Gastrocnemius medialis (tissue), 4 donors: ENCODE measurements at regions of chr11 and their contacts with region 1.

Region 1: DNA sequence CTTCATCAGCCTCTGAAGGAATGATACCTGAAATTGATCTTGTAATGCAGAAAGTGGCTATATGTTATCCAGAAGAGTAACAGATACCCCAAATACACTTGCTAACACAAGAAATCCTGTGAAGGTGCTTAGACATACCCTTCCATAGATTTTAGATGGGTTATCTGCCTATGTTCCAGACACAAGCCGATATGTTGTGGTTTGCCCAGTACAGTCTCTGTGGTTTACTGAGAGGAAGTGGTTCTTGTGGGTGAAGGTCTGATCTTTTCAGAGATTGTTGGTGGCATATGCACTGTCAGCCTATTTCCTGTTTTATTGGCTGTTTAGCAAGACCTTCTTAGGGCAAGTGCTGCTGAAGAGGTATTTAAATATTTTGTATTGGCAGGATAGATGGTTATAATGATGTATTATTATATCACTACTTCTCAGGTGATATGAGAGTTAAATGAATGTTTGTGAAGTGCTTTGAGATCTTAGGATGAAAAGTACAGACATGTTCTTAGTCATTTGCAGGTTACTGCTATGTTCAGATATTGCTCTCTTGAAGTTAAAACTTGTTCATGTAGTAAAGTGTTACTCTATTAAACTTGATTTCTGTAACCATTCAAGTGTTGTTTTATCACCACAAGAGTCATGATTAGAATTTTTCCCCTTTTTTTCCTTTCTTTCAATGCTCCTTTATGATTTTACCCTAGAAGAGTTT is 8.2 kb downstream of the ARHGEF12 start:
- DNase-seq: no peak
- ATAC-seq: no peak
- H3K4me3 ChIP-seq: peak overlapping the region in 1 of 4 donors; percentile 2
- H3K27ac ChIP-seq: peak overlapping the region; percentile 67 to 99 (median 92)
- H3K4me1 ChIP-seq: peaks cover 92 to 93% of the 10 kb centered on the region in 2 donors
- H3K27me3 ChIP-seq: no peaks in the 10 kb centered on the region
- CTCF ChIP-seq: no peak
- POLR2A ChIP-seq: no peak

Region 2: DNA sequence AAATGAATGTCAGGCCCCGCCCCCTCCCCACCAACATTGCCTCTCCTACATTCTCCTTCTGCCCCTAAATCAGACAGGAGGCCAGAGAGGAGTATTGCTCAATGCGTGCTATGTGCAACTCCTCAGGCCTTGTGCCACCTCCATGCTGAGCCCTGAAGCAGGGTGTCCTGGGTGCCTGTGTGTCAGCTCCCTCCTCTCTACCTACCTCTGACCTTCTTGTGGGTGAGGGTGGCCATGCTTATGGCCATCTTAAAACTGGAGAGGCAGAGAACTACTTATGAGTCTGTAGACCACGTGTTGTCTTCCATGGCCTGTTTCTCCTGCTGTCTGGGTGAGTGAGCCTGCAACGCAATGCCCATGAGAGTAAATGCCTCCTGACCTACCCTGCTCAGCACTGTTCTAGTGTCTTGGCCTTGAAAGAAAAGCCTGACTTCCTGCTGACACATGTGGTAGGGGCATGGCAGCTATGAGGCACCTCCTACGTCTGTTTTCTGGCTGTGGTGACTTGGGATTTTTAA is 1038.0 kb before region 1 on chr11:
- in situ Hi-C with region 1: no loop called
- intact Hi-C with region 1: loop called (anchors 10 kb)
- DNase-seq: peak in 1 of 2 donors; percentile 74
- ATAC-seq: peak; percentile 48 to 84
- H3K4me3 ChIP-seq: no peak overlapping the region
- H3K27ac ChIP-seq: peak overlapping the region; percentile 63 to 74 (median 71)
- H3K4me1 ChIP-seq: peaks cover 44 to 47% of the 10 kb centered on the region in 2 donors
- H3K27me3 ChIP-seq: no peaks in the 10 kb centered on the region
- CTCF ChIP-seq: no peak
- POLR2A ChIP-seq: no peak

Region 3: DNA sequence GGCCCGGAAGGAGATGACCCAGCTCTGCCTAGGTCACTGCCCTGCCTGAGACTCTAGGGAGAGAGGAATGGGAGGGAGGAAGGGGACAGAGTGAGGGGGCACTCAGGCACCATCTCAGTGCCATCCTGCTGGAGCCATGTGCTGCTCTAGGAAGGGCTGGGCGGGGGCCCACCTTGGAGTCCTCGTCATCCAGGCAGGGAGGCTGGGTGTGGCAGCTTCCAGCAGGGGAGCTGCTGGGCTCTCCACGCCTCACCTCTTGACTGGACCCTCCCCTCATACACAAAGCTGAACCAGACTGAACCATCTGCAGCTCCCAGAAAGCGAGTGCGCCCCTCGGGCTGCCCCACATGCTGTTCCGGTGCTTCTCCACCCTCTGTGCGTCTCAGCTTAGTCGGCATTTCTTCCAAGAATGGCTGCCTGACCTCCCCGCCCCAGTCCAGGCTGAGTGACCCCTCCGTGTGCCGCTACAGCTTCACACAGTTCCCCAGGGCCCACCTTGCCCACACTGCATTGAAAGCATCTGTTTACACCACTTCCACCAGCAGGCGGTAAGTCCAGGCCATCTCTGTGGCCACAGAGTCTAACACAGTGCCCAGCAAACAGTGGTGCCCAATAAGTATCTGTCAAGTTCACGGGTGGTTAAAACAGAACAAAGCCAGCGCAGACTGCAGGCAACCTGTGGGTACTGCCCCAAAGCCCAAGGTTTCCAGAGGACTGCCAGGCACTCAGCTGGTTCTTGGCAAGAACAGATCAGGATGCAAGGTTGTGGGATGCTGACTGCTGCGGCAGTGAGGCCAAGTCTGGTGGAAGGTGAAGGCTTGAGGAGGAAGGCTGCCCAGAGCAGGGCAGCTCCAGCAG is 197.1 kb before region 1 on chr11:
- in situ Hi-C with region 1: no loop called
- intact Hi-C with region 1: no loop called
- DNase-seq: no peak
- ATAC-seq: no peak
- H3K4me3 ChIP-seq: no peak overlapping the region
- H3K27ac ChIP-seq: no peak overlapping the region
- H3K4me1 ChIP-seq: no peaks in the 10 kb centered on the region
- H3K27me3 ChIP-seq: peaks cover 12 to 24% (median 23%) of the 10 kb centered on the region in 3 donors
- CTCF ChIP-seq: no peak
- POLR2A ChIP-seq: no peak

Region 4: GRCh38 chr11:120400564-120401364 is 56.3 kb after region 1 on chr11:
- in situ Hi-C with region 1: no loop called
- intact Hi-C with region 1: loop called (anchors 2 kb)
- DNase-seq: peak; percentile 64 to 70
- ATAC-seq: peak; percentile 98 to 99
- H3K4me3 ChIP-seq: peak overlapping the region; percentile 35 to 51 (median 40)
- H3K27ac ChIP-seq: peak overlapping the region; percentile 83 to 85 (median 84)
- H3K4me1 ChIP-seq: peaks cover 68 to 86% of the 10 kb centered on the region in 2 donors
- H3K27me3 ChIP-seq: no peaks in the 10 kb centered on the region
- CTCF ChIP-seq: no peak
- POLR2A ChIP-seq: peak; percentile 19 to 41